Esophagus squamous epithelium (tissue), 5 donors: ENCODE measurements at regions of chr16 and their contacts with region 1.

Region 1: GRCh38 chr16:11742539-11743307 is at the start of gene TXNDC11:
- DNase-seq: peak; percentile 94
- H3K4me3 ChIP-seq: peak within 1 kb of the TSS; percentile 75 to 96 (median 94)
- H3K27ac ChIP-seq: peak within 1 kb of the TSS; percentile 98 to 100 (median 99)
- H3K4me1 ChIP-seq: peaks cover 14 to 50% (median 19%) of the 10 kb centered on the region in 3 donors
- H3K27me3 ChIP-seq: no peaks in the 10 kb centered on the region
- CTCF ChIP-seq: peak in 3 of 6 experiments; percentile 3 to 24 (median 9)
- POLR2A ChIP-seq: peak in 3 of 4 donors; percentile 82 to 99 (median 98)
- total RNA-seq, gene TXNDC11: 26.0 to 39.1 (median 35.9) TPM

Region 2: GRCh38 chr16:11361701-11362451 is 380.8 kb before region 1 on chr16:
- intact Hi-C with region 1: no loop called
- DNase-seq: no peak
- H3K4me3 ChIP-seq: peak overlapping the region in 1 of 4 donors; percentile 2
- H3K27ac ChIP-seq: no peak overlapping the region
- H3K4me1 ChIP-seq: peaks cover 24 to 80% (median 44%) of the 10 kb centered on the region in 3 donors
- H3K27me3 ChIP-seq: no peaks in the 10 kb centered on the region
- CTCF ChIP-seq: no peak
- POLR2A ChIP-seq: no peak

Region 3: GRCh38 chr16:11632464-11632939 is 110.2 kb before region 1 on chr16:
- intact Hi-C with region 1: no loop called
- DNase-seq: no peak
- H3K4me3 ChIP-seq: peak overlapping the region in 1 of 4 donors; percentile 2
- H3K27ac ChIP-seq: peak overlapping the region; percentile 65 to 87 (median 75)
- H3K4me1 ChIP-seq: peaks cover 10 to 70% (median 21%) of the 10 kb centered on the region in 3 donors
- H3K27me3 ChIP-seq: no peaks in the 10 kb centered on the region
- CTCF ChIP-seq: no peak
- POLR2A ChIP-seq: peak in 1 of 4 donors; percentile 28

Region 4: GRCh38 chr16:11797166-11797956 is 54.6 kb after region 1 on chr16 and contains the start of gene ZC3H7A:
- intact Hi-C with region 1: loop called (anchors 5 kb)
- DNase-seq: peak; percentile 76
- H3K4me3 ChIP-seq: peak within 1 kb of the TSS; percentile 53 to 88 (median 80)
- H3K27ac ChIP-seq: peak within 1 kb of the TSS; percentile 92 to 99 (median 96)
- H3K4me1 ChIP-seq: peaks cover 37 to 76% (median 56%) of the 10 kb centered on the region in 3 donors
- H3K27me3 ChIP-seq: no peaks in the 10 kb centered on the region
- CTCF ChIP-seq: peak; percentile 55 to 99 (median 98)
- POLR2A ChIP-seq: peak in 3 of 4 donors; percentile 87 to 95 (median 93)
- total RNA-seq, gene ZC3H7A: 16.6 to 34.1 (median 30.2) TPM